ENCODE measurements at regions of chr5 and their contacts with region 1.

Region 1: GRCh38 chr5:81751009-81751835 is at the start of gene SSBP2:
- DNase-seq: peak; percentile 98
- H3K4me3 Mint-ChIP-seq: peak within 1 kb of the TSS; percentile 92
- H3K27ac Mint-ChIP-seq: peak within 1 kb of the TSS; percentile 80
- H3K4me1 Mint-ChIP-seq: peaks cover 27% of the 10 kb centered on the region
- H3K27me3 Mint-ChIP-seq: no peaks in the 10 kb centered on the region
- total RNA-seq, gene SSBP2: 14.5 to 14.7 TPM

Region 2: DNA sequence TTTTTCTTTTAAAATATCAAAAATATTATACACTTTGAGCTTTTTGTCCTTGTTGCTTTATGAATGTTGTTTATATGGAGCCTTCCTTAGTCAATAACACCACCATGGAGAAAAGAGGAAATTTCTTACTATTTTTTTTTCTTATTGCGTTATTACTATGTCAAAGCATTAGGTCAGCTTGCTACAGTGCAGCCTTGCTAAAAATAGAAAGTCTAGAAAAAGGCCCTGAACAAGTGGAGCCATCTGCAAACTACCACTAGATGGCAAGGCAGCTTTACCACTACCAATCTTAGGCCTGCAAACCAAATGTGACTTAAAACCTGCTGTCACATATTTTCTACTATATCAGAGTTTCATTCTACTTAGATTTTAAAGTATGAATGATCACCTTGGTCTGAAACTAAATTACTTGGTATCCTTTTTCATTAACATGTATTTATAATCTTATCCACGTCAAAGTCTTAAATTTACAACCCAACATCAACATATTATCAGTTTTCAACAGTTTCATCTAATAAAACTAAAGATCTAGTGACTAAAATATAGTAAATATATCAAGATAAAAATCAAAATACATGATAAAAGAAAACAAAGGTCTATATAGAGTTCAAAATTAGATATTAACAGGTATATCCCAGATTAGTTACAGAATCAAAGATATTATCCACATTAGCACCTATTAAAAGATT is 244.2 kb before region 1 on chr5:
- CTCF ChIA-PET with region 1: interaction called, 4 read pairs
- intact Hi-C with region 1: loop called (anchors 1 kb)
- DNase-seq: peak; percentile 62
- H3K4me3 Mint-ChIP-seq: no peak overlapping the region
- H3K27ac Mint-ChIP-seq: no peak overlapping the region
- H3K4me1 Mint-ChIP-seq: no peaks in the 10 kb centered on the region
- H3K27me3 Mint-ChIP-seq: no peaks in the 10 kb centered on the region

Region 3: DNA sequence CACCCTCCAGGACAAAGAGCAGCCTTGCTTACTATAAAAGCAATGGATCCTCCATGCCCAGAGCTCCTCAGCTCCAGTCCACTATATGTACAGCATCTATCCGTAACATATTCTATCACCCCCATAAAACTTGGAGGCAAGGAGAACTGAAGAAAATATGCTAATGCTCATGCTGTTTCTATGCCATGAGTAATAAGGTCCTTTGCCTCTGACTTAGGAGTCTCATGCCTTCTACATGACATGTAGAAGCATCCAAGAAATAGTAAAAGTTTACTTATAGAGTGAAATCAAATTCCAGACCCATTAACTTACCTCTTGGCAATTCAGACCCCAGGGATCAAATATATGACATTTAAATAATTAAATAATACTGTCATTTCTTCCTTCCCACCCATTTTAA is 34.0 kb before region 1 on chr5:
- CTCF ChIA-PET with region 1: no interaction called
- intact Hi-C with region 1: loop called (anchors 1 kb)
- DNase-seq: no peak
- H3K4me3 Mint-ChIP-seq: no peak overlapping the region
- H3K27ac Mint-ChIP-seq: no peak overlapping the region
- H3K4me1 Mint-ChIP-seq: peaks cover 57% of the 10 kb centered on the region
- H3K27me3 Mint-ChIP-seq: no peaks in the 10 kb centered on the region

Region 4: DNA sequence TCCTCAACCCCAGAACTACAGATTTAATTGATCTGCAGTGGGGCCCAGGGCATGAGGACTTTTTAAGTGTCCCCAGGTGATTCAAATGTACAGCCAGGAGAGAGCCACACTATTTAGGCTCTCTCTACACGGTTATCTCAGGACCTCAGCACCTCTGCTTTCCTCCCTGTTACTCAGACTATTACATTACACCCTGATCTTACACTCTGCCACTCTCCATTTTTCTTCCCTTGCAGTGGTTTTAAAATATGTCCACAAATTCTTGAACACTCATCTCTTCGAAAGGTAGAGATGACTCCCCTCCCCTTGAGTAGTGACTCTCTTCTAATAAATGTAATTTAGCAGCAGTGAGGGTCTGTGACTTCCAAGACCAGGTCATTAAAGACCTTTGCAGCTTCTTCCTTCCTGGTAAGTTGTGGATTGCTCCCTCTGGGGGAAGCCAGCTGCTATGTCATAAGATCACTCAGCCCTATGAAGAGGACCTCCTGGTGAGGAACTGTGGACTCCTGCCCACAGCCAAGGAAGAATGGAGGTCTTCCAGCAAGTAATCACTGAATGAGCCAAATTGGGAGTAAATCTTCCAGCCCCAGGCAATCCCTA is 87.2 kb after region 1 on chr5:
- CTCF ChIA-PET with region 1: no interaction called
- intact Hi-C with region 1: loop called (anchors 1 kb)
- DNase-seq: peak; percentile 46
- H3K4me3 Mint-ChIP-seq: no peak overlapping the region
- H3K27ac Mint-ChIP-seq: no peak overlapping the region
- H3K4me1 Mint-ChIP-seq: peaks cover 9% of the 10 kb centered on the region
- H3K27me3 Mint-ChIP-seq: no peaks in the 10 kb centered on the region

Region 5: GRCh38 chr5:82107267-82107666 is 356.0 kb after region 1 on chr5:
- CTCF ChIA-PET with region 1: no interaction called
- intact Hi-C with region 1: loop called (anchors 10 kb)
- DNase-seq: no peak
- H3K4me3 Mint-ChIP-seq: no peak overlapping the region
- H3K27ac Mint-ChIP-seq: no peak overlapping the region
- H3K4me1 Mint-ChIP-seq: peaks cover 15% of the 10 kb centered on the region
- H3K27me3 Mint-ChIP-seq: no peaks in the 10 kb centered on the region

Region 6: DNA sequence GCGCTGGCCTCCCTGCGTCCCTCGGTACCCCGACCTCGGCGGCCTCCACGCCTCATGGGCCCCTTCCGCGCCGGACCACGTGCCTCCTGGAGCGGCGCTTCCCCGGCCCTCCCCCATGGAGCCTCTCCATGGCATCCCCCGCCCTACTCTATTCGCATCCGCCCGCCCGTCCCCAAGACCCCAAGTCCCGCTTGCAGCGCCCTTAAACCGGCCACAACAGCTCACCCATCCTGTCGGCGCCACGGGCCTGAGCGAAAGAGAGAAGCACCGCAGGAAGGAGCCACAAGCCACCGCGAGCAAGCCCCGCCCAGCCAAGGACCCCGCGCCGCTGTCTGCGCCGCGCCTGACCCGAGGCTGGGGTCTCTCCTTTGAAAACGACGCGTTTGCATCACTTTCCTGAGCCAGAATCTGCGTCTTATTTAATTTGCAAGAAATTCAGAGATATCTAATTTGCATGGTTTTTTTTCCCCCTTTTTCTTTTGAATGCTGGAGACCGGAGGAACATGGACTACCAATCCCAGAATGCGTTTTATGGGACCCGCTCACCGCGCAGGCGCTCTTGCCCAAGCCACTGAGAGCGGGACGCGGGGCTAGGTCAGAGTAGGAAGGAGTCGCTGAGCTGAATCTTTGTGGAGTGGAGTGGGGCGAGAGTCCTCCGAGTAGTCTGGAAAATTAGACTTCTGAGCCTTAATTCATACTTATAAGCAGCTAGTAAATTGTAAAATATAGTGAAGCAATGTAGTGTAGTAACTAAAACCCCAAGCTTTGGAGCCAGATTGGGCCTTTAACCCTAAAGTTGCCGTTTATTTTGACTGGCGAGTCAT is 527.1 kb after region 1 on chr5 and contains the start of gene RPS23:
- CTCF ChIA-PET with region 1: no interaction called
- intact Hi-C with region 1: loop called (anchors 1 kb)
- DNase-seq: peak; percentile 93
- H3K4me3 Mint-ChIP-seq: peak within 1 kb of the TSS; percentile 95
- H3K27ac Mint-ChIP-seq: peak within 1 kb of the TSS; percentile 99
- H3K4me1 Mint-ChIP-seq: peaks cover 38% of the 10 kb centered on the region
- H3K27me3 Mint-ChIP-seq: no peaks in the 10 kb centered on the region
- total RNA-seq, gene RPS23: 3,081 to 3,109 TPM

Measured in activated naive CD4-positive, alpha-beta T cell treated with anti-CD3 and anti-CD28 coated beads for 36 hours (primary cell).